PC-3 (cell line): ENCODE measurements at regions of chr2 and their contacts with region 1.

Region 1: DNA sequence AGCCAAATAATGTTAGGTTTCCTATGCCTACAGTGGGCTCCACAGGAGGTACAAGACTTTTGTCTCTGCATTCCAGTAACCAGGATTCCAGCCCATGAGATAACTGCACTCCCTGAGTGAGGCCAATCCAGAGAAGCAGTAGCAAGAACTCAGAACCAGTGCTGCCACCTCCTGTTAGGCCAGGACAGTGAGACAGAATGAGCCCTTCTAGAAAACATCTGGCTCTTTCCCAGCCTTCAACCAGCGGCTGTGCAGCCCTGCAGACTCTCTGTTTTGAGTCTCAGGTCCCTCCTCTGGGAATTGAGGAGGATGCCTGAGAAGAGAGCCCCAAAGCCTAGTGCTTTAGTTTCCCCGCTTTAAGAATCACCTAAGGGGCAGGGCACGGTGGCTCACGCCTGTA is 44.2 kb downstream of the ARID5A start:
- DNase-seq: peak; percentile 44
- ATAC-seq: peak; percentile 70
- H3K4me3 ChIP-seq: no peak overlapping the region
- H3K27ac ChIP-seq: no peak overlapping the region
- H3K4me1 ChIP-seq: peaks cover 6% of the 10 kb centered on the region; the same call in 1 of the 2 replicates
- H3K27me3 ChIP-seq: no peaks in the 10 kb centered on the region
- CTCF ChIP-seq: peak; percentile 48

Region 2: GRCh38 chr2:96554293-96555145 is 26.3 kb before region 1 on chr2:
- CTCF ChIA-PET with region 1: interaction called, 3 read pairs
- POLR2A ChIA-PET with region 1: no interaction called
- intact Hi-C with region 1: loop called (anchors 1 kb)
- DNase-seq: peak; percentile 64
- ATAC-seq: peak; percentile 28
- H3K4me3 ChIP-seq: no peak overlapping the region
- H3K27ac ChIP-seq: no peak overlapping the region
- H3K4me1 ChIP-seq: peaks cover 27% of the 10 kb centered on the region
- H3K27me3 ChIP-seq: no peaks in the 10 kb centered on the region
- CTCF ChIP-seq: peak; percentile 93